Activated CD4-positive, alpha-beta T cell treated with anti-CD3 and anti-CD28 coated beads, Interleukin-2, amount 10 ng/mL, durations not matched to agents 24 days and 14 days (primary cell): ENCODE measurements at regions of chr6 and their contacts with region 1.

Region 1: GRCh38 chr6:2988426-2989331 is 11.0 kb upstream of the NQO2 start:
- DNase-seq: peak; percentile 93
- H3K4me3 Mint-ChIP-seq: peak overlapping the region; percentile 89
- H3K27ac Mint-ChIP-seq: peak overlapping the region; percentile 99
- H3K4me1 Mint-ChIP-seq: peaks cover 22% of the 10 kb centered on the region
- H3K27me3 Mint-ChIP-seq: peaks cover 3% of the 10 kb centered on the region

Region 2: GRCh38 chr6:2952557-2953095 is 36.1 kb before region 1 on chr6:
- intact Hi-C with region 1: loop called (anchors 1 kb)
- DNase-seq: peak; percentile 86
- H3K4me3 Mint-ChIP-seq: peak overlapping the region; percentile 62
- H3K27ac Mint-ChIP-seq: peak overlapping the region; percentile 64
- H3K4me1 Mint-ChIP-seq: peaks cover 9% of the 10 kb centered on the region
- H3K27me3 Mint-ChIP-seq: peaks cover 3% of the 10 kb centered on the region

Region 3: GRCh38 chr6:2971420-2972218 is 17.1 kb before region 1 on chr6 and contains the start of gene SERPINB6:
- intact Hi-C with region 1: loop called (anchors 1 kb)
- DNase-seq: peak; percentile 82
- H3K4me3 Mint-ChIP-seq: peak within 1 kb of the TSS; percentile 87
- H3K27ac Mint-ChIP-seq: peak within 1 kb of the TSS; percentile 85
- H3K4me1 Mint-ChIP-seq: peaks cover 11% of the 10 kb centered on the region
- H3K27me3 Mint-ChIP-seq: peaks cover 51% of the 10 kb centered on the region
- total RNA-seq, gene SERPINB6: 33.1 and 36.2 TPM in 2 replicates

Region 4: GRCh38 chr6:3009930-3010329 is 21.3 kb after region 1 on chr6:
- intact Hi-C with region 1: no loop called
- DNase-seq: no peak
- H3K4me3 Mint-ChIP-seq: no peak overlapping the region
- H3K27ac Mint-ChIP-seq: no peak overlapping the region
- H3K4me1 Mint-ChIP-seq: peaks cover 5% of the 10 kb centered on the region
- H3K27me3 Mint-ChIP-seq: no peaks in the 10 kb centered on the region

Region 5: GRCh38 chr6:3962957-3963303 is 974.3 kb after region 1 on chr6:
- intact Hi-C with region 1: no loop called
- DNase-seq: no peak
- H3K4me3 Mint-ChIP-seq: no peak overlapping the region
- H3K27ac Mint-ChIP-seq: no peak overlapping the region
- H3K4me1 Mint-ChIP-seq: no peaks in the 10 kb centered on the region
- H3K27me3 Mint-ChIP-seq: peaks cover 13% of the 10 kb centered on the region